ENCODE measurements at regions of chr7 and their contacts with region 1.

Region 1: GRCh38 chr7:1459522-1459892 is 237 bp upstream of the MICALL2 start:
- DNase-seq: peak; percentile 97
- ATAC-seq: peak; percentile 76
- H3K4me3 ChIP-seq: peak overlapping the region; percentile 99; the same call in 1 of the 2 replicates
- H3K27ac ChIP-seq: no peak overlapping the region; the same call in 1 of the 2 replicates
- H3K4me1 ChIP-seq: peaks cover 37% of the 10 kb centered on the region
- H3K27me3 ChIP-seq: no peaks in the 10 kb centered on the region
- CTCF ChIP-seq: no peak

Region 2: DNA sequence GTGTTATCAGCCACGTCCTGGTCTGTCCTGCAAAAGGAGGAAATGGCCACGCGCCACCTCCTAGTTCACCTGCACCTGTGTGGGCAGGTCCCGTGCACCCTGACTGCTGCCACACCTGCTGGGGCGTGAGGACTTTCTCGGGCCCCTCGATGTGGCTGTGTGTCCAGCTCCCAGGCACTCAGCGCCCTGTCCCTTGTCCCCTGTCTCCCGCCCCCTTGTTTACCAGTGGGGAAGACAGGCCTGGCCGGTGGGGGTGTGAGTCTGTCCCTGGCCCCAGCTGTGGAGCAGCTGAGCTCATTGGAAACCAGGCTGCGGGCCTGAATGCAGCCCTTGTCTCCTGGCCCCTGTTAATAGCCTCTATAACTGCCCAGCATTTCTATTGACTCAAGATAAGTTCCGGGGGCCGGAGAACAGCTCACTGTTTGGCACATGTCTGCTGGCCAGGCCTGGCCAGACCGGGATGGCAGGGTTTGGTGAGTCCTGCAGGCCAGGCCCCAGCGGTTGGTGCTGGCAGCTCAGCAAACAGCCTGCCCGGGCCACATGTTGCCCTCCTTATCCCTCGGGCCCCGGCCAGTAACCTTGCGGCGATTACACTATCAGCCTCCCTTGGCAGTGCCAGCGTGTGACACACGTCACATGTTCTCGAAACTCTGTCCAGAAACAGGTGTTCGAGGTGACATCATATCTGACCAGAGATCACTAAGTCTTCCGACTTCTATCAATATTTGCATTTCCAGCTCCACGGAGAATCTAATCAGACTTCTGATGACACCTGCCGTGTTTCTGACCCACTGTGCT is 1117.5 kb before region 1 on chr7:
- CTCF ChIA-PET with region 1: no interaction called
- POLR2A ChIA-PET with region 1: interaction called, 16 read pairs
- intact Hi-C with region 1: no loop called
- DNase-seq: peak; percentile 66
- ATAC-seq: peak; percentile 94
- H3K4me3 ChIP-seq: no peak overlapping the region
- H3K27ac ChIP-seq: no peak overlapping the region
- H3K4me1 ChIP-seq: peaks cover 13% of the 10 kb centered on the region
- H3K27me3 ChIP-seq: no peaks in the 10 kb centered on the region
- CTCF ChIP-seq: no peak

Region 3: GRCh38 chr7:1473864-1474512 is 14.5 kb after region 1 on chr7:
- CTCF ChIA-PET with region 1: no interaction called
- POLR2A ChIA-PET with region 1: no interaction called
- intact Hi-C with region 1: loop called (anchors 1 kb)
- DNase-seq: peak; percentile 81
- ATAC-seq: peak; percentile 84
- H3K4me3 ChIP-seq: no peak overlapping the region
- H3K27ac ChIP-seq: no peak overlapping the region
- H3K4me1 ChIP-seq: no peaks in the 10 kb centered on the region
- H3K27me3 ChIP-seq: no peaks in the 10 kb centered on the region
- CTCF ChIP-seq: peak; percentile 78

Measured in PC-3 (cell line).